ENCODE measurements at regions of chr14 and their contacts with region 1.

Region 1: GRCh38 chr14:64986578-64987571 is at the start of gene FNTB:
- DNase-seq: peak; percentile 97
- H3K4me3 Mint-ChIP-seq: peak within 1 kb of the TSS; percentile 89
- H3K27ac Mint-ChIP-seq: peak within 1 kb of the TSS; percentile 96
- H3K4me1 Mint-ChIP-seq: peaks cover 42% of the 10 kb centered on the region
- H3K27me3 Mint-ChIP-seq: peaks cover 23% of the 10 kb centered on the region
- total RNA-seq, gene FNTB: 18.9 and 19.1 TPM in 2 replicates

Region 2: DNA sequence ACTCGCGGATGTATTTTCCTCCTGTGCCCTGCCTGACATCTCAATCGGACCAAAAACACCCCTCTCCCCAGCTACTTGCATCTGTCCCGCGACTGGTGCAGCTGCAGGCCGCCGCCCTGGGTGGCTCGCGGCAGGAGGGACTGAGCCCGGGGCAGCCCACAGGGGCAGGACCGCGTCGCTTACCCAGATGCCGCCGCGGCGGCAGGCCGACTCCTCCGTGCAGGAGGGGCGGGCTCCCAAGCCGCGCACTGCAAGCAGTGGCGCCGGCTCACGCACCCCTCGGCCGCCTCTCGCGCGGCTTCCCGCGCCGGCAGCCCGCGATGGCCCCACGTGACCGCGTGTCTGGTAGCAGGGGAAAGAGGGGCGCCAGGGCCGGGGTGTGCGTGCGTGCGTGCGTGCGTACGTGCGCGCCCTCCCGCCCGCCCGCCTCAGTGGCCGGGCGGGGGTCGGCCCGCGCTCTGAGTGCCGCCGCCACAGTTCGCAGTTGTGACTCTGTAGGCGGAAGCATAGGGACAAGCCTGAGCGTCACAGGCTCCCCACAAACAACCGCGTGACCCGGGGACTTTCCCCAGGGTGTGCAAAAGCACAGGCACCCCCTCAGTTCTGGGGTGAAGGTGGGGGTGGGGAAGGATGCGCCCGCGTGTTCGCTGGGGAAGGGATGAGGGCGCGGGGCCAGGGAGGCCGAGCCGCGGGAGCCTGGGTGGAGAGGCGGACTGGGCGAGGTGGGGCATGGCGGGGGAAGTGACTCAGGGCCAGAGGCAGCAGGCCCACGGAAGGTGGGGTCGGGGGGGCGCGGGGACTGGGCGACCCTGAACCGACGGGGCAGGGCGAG is 483.2 kb before region 1 on chr14 and contains the start of gene ZBTB25:
- intact Hi-C with region 1: loop called (anchors 5 kb)
- DNase-seq: peak; percentile 99
- H3K4me3 Mint-ChIP-seq: peak within 1 kb of the TSS; percentile 94
- H3K27ac Mint-ChIP-seq: peak within 1 kb of the TSS; percentile 100
- H3K4me1 Mint-ChIP-seq: peaks cover 56% of the 10 kb centered on the region
- H3K27me3 Mint-ChIP-seq: peaks cover 1% of the 10 kb centered on the region
- total RNA-seq, gene ZBTB25: 21.8 and 22.2 TPM in 2 replicates

Region 3: GRCh38 chr14:64823305-64823861 is 163.5 kb before region 1 on chr14:
- intact Hi-C with region 1: loop called (anchors 1 kb)
- DNase-seq: peak; percentile 89
- H3K4me3 Mint-ChIP-seq: peak overlapping the region; percentile 53
- H3K27ac Mint-ChIP-seq: no peak overlapping the region
- H3K4me1 Mint-ChIP-seq: peaks cover 4% of the 10 kb centered on the region
- H3K27me3 Mint-ChIP-seq: peaks cover 44% of the 10 kb centered on the region

Region 4: DNA sequence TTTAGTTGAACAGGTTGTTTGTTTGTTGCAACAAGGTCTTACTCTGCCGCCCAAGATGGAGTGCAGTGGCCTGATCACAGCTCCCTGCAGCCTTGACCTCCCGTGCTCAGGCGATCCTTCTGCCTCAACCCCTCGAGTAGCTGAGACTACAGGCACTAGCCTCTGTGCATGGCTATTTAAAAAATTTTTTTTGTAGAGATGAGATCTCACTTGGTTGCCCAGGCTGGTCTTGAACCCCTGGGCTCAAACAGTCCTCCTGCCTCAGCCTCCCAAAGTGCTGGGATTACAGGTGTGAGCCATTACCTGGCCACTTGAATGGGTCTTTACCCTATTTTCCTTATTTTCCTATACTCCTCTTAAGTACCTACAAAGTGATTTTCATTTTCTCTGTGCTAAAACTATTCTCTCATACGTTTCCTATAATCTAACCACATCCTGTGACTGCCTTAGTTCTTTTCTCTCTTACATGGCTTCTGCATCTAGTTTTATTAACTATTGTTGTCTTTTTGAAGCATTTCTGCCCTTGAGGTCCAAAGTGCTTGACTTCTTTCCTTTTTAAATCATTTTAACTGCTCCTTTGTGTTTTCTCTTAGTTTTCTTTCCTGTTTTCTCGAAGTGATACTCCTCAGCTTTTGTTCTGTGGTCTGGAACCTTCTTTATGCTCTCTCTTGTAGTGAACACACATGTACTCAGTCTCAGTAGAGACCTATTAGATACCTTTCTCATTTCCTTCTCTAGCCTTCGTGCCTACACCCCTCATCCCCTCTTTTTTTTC is 58.4 kb before region 1 on chr14:
- intact Hi-C with region 1: no loop called
- DNase-seq: peak; percentile 75
- H3K4me3 Mint-ChIP-seq: no peak overlapping the region
- H3K27ac Mint-ChIP-seq: no peak overlapping the region
- H3K4me1 Mint-ChIP-seq: peaks cover 28% of the 10 kb centered on the region
- H3K27me3 Mint-ChIP-seq: no peaks in the 10 kb centered on the region

Region 5: GRCh38 chr14:64971943-64972791 is 14.7 kb before region 1 on chr14 and contains the start of gene RAB15:
- intact Hi-C with region 1: loop called (anchors 2 kb)
- DNase-seq: peak; percentile 85
- H3K4me3 Mint-ChIP-seq: peak within 1 kb of the TSS; percentile 86
- H3K27ac Mint-ChIP-seq: peak within 1 kb of the TSS; percentile 81
- H3K4me1 Mint-ChIP-seq: peaks cover 7% of the 10 kb centered on the region
- H3K27me3 Mint-ChIP-seq: peaks cover 13% of the 10 kb centered on the region
- total RNA-seq, gene RAB15: 6.2 and 6.9 TPM in 2 replicates

Region 6: GRCh38 chr14:65019944-65020566 is 33.2 kb after region 1 on chr14:
- intact Hi-C with region 1: loop called (anchors 1 kb)
- DNase-seq: no peak
- H3K4me3 Mint-ChIP-seq: no peak overlapping the region
- H3K27ac Mint-ChIP-seq: no peak overlapping the region
- H3K4me1 Mint-ChIP-seq: no peaks in the 10 kb centered on the region
- H3K27me3 Mint-ChIP-seq: no peaks in the 10 kb centered on the region

Region 7: GRCh38 chr14:65164068-65164824 is 177.4 kb after region 1 on chr14:
- intact Hi-C with region 1: loop called (anchors 5 kb)
- DNase-seq: peak; percentile 85
- H3K4me3 Mint-ChIP-seq: no peak overlapping the region
- H3K27ac Mint-ChIP-seq: no peak overlapping the region
- H3K4me1 Mint-ChIP-seq: peaks cover 32% of the 10 kb centered on the region
- H3K27me3 Mint-ChIP-seq: no peaks in the 10 kb centered on the region